Activated CD8-positive, alpha-beta T cell treated with anti-CD3 and anti-CD28 coated beads, Interleukin-2, amount 10 ng/mL, durations not matched to agents 7 days and 5 days (primary cell): ENCODE measurements at regions of chr11 and their contacts with region 1.

Region 1: DNA sequence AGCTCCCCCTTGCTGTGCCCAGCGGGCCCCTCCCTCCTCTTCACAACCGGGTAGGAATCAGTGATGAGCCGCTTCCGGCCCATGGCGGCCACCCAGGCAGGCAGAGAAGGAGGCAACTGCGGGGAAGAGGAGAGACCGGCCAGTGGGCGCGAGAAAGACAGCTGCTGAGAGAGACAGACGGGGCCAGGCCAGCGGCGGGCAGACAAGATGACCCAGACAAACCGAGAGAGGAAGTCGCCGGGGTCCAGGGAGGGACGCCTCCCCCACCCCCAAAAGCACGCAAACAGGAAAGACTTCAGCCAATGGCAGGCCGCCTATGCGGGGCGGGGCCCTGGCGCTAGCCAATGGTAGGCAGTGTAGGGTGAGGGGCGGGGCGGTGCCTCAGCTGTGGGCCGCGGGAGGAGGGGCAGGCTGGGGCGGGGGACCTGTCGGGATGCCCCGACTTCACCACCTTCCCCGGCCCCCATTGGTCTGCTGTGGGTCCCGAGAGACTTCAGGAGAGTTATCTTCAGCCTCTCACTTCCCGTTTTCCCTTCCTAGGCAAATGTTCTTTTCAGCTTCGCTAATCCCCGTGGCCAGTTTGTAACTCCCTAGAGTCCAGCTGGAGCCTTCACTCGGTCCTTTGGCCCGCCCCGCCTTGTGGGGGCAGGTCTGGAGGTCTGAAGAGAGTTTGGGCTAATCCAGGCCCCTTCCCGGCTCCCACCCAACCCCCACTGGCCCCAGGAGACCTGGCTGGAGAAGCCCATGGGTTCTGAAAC is at the start of gene POLD4:
- DNase-seq: peak; percentile 96
- ATAC-seq: peak; percentile 92
- H3K4me3 Mint-ChIP-seq: peak within 1 kb of the TSS; percentile 93
- H3K27ac Mint-ChIP-seq: peak within 1 kb of the TSS; percentile 99
- H3K4me1 Mint-ChIP-seq: peaks cover 42% of the 10 kb centered on the region
- H3K27me3 Mint-ChIP-seq: peaks cover 12% of the 10 kb centered on the region
- total RNA-seq, gene POLD4: 53.2 to 56.7 TPM

Region 2: DNA sequence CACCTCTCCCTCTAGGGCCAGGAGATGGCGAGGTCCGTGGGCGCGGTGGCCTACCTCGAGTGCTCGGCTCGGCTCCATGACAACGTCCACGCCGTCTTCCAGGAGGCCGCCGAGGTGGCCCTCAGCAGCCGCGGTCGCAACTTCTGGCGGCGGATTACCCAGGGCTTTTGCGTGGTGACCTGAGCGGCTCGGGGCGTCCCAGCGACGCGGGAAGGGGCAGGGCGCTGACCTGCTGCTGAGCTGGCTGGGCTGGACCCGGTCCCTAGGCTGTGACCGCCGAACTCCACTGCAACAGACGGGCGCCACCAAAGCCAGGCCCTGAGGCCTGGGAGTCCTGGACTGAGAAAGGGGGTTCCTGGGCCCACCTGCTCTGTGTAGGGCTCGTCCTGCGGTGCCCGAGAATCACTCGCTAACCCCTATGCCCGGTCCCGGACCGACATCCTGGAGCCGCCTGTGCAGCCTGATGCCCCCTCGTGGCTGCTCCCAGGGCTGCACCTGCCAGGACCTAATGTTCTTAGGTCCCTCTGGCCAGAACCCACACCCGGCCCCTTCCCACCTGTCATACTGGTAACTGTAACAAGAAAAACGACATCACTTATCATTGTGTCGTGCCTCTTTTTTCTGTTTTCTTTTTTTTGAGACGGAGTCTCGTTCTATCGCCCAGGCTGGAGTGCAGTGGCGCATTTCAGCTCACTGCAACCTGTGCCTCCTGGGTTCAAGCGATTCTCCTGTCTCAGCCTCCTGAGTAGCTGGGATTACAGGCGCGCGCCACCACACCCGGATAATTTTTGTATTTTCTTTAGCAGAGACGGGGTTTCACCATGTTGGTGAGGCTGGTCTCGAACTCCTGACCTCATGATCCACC is 281.8 kb before region 1 on chr11:
- CTCF ChIA-PET with region 1: no interaction called
- POLR2A ChIA-PET with region 1: no interaction called
- DNase-seq: peak; percentile 82
- ATAC-seq: peak; percentile 92
- H3K4me3 Mint-ChIP-seq: no peak overlapping the region
- H3K27ac Mint-ChIP-seq: no peak overlapping the region
- H3K4me1 Mint-ChIP-seq: no peaks in the 10 kb centered on the region
- H3K27me3 Mint-ChIP-seq: peaks cover 5% of the 10 kb centered on the region

Region 3: GRCh38 chr11:67111261-67111660 is 242.2 kb before region 1 on chr11:
- CTCF ChIA-PET with region 1: no interaction called
- POLR2A ChIA-PET with region 1: no interaction called
- DNase-seq: no peak
- ATAC-seq: no peak
- H3K4me3 Mint-ChIP-seq: no peak overlapping the region
- H3K27ac Mint-ChIP-seq: no peak overlapping the region
- H3K4me1 Mint-ChIP-seq: peaks cover 10% of the 10 kb centered on the region
- H3K27me3 Mint-ChIP-seq: peaks cover 2% of the 10 kb centered on the region

Region 4: DNA sequence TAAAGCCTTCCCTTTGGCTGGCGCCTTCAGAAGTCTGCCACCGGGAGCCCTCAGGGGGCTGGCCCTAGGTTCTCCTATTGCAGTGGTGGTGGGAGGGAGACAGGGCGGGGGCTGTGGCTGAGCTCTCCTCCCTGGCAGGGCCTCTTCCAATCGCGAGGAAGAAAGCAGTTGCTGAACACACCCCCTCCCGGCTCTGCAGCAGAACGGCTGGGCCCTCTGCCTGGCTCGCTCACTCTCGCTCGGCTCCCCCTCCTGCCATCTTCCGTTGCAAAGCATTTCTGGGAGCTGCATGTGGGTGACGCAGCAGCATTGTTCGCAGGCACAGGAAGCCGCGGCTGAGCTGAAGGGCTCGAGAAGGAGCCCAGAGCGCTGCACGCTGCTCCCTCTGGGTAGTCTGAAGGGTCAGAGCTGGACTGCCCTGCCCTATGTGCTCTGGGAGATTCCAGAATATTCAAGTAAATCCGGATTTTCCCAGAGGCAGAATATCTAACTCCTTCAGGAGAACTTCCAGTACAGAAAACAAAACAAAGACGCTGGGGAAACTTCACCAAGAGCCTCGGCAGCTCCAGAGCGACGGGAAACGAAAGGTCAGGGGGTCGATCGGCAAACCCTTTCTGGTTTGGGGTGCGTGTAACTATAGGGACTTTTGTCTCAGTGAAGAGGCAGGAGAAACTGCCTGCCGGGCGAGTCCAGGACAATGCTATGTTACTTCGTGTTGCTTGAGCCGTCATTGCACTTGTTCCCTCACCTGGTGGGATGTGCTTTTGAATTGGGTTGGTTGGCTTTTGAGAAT is 113.5 kb before region 1 on chr11:
- CTCF ChIA-PET with region 1: interaction called, 10 read pairs
- POLR2A ChIA-PET with region 1: interaction called, 3 read pairs
- DNase-seq: peak; percentile 98
- ATAC-seq: peak; percentile 94
- H3K4me3 Mint-ChIP-seq: peak overlapping the region; percentile 100
- H3K27ac Mint-ChIP-seq: peak overlapping the region; percentile 98
- H3K4me1 Mint-ChIP-seq: peaks cover 45% of the 10 kb centered on the region
- H3K27me3 Mint-ChIP-seq: no peaks in the 10 kb centered on the region

Region 5: DNA sequence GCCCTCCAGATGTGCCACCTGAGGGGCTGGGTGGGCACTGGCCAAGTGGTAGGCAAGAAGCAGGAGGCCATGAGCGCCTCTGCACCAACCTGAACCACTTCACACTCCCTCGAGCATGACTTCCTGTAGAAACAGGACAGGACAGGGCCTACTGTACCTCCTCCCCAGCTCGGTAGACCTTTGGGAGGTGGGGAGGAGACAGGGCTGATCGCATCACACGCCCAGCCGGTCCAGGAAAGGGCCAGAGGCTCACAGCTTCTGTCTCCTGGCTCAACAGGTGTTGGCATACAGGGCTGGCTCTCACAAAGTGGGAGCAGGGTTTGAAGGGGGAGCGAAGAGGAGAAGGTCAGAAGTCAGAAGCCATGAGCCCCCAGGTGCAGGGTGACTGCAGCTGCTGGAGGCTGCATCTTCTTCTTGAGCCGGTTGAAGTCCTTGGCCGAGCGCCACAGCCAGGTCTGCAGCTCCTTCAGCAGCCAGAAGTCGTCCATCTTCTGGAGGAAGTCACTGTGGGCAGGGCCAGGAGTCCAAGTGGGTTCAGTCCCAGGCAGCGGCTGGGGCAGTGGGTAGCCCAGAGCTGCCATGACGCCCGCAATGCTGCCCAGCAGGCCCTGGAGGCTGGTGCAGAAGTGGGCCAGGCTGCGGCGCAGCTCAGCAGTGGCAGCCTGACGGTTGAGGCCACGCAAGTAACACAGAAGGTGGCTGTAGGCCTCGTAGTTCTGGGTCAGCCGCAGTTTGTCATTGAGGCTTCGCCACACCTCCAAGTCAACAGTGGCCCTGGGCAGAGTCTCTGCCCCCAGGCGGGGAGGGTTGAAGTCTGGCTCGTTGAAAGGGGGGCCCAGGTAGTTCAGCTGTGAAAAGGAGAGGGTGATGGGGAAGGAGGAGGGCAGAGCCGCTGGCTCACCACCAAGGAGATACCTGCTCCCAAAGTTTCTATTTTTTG is 11.6 kb after region 1 on chr11:
- CTCF ChIA-PET with region 1: interaction called, 998 read pairs
- POLR2A ChIA-PET with region 1: interaction called, 8 read pairs
- DNase-seq: no peak
- ATAC-seq: no peak
- H3K4me3 Mint-ChIP-seq: no peak overlapping the region
- H3K27ac Mint-ChIP-seq: no peak overlapping the region
- H3K4me1 Mint-ChIP-seq: peaks cover 41% of the 10 kb centered on the region
- H3K27me3 Mint-ChIP-seq: peaks cover 46% of the 10 kb centered on the region

Region 6: GRCh38 chr11:67382276-67383136 is 29.0 kb after region 1 on chr11:
- CTCF ChIA-PET with region 1: interaction called, 998 read pairs
- POLR2A ChIA-PET with region 1: interaction called, 28 read pairs
- DNase-seq: peak; percentile 90
- ATAC-seq: peak; percentile 97
- H3K4me3 Mint-ChIP-seq: no peak overlapping the region
- H3K27ac Mint-ChIP-seq: no peak overlapping the region
- H3K4me1 Mint-ChIP-seq: peaks cover 7% of the 10 kb centered on the region
- H3K27me3 Mint-ChIP-seq: peaks cover 19% of the 10 kb centered on the region

Region 7: GRCh38 chr11:67391304-67392132 is 38.0 kb after region 1 on chr11 and contains the start of gene RAD9A:
- CTCF ChIA-PET with region 1: interaction called, 998 read pairs
- POLR2A ChIA-PET with region 1: interaction called, 5 read pairs
- DNase-seq: peak; percentile 96
- ATAC-seq: peak; percentile 82
- H3K4me3 Mint-ChIP-seq: peak within 1 kb of the TSS; percentile 97
- H3K27ac Mint-ChIP-seq: peak within 1 kb of the TSS; percentile 83
- H3K4me1 Mint-ChIP-seq: peaks cover 51% of the 10 kb centered on the region
- H3K27me3 Mint-ChIP-seq: no peaks in the 10 kb centered on the region
- total RNA-seq, gene RAD9A: 59.5 to 60.4 TPM